Activated B cell treated with CpG ODN at 0.5 μM for 24 hours (primary cell): ENCODE measurements at regions of chr1 and their contacts with region 1.

Region 1: DNA sequence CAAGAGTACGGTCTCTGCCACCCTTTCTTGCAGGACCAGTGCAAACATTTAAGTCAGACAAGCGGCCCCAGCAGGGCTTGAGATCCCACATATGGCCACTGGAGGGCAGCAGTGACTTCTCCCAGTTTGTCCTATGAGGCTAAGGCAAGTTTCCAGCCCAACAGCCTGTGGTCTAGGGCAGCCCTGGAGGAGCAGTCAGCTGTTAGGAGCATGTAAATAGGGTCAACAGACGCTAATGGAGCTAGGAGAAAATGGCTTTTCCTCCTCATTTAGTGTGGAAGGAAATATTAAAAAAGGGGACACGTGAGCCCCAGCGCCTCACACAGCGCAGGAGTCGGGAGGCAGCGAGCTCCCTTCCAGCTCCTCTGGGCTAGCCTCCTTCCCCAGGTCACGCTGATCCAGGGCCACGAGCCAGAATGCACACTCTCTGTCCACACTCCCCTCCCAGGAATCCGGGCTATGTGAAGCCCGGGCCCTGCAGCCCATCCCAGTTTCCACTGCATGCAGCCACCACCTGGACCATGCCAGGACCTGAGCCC is 95.6 kb downstream of the LAMC2 start:
- DNase-seq: peak; percentile 57
- ATAC-seq: peak; percentile 67
- H3K4me3 Mint-ChIP-seq: no peak overlapping the region
- H3K27ac Mint-ChIP-seq: no peak overlapping the region
- H3K4me1 Mint-ChIP-seq: no peaks in the 10 kb centered on the region
- H3K27me3 Mint-ChIP-seq: peaks cover 17% of the 10 kb centered on the region
- CTCF ChIP-seq: peak; percentile 63

Region 2: GRCh38 chr1:183148599-183148998 is 133.0 kb before region 1 on chr1:
- CTCF ChIA-PET with region 1: no interaction called
- POLR2A ChIA-PET with region 1: no interaction called
- intact Hi-C with region 1: no loop called
- DNase-seq: no peak
- ATAC-seq: no peak
- H3K4me3 Mint-ChIP-seq: no peak overlapping the region
- H3K27ac Mint-ChIP-seq: no peak overlapping the region
- H3K4me1 Mint-ChIP-seq: no peaks in the 10 kb centered on the region
- H3K27me3 Mint-ChIP-seq: peaks cover 6% of the 10 kb centered on the region
- CTCF ChIP-seq: no peak

Region 3: GRCh38 chr1:183543619-183544204 is 262.1 kb after region 1 on chr1:
- CTCF ChIA-PET with region 1: no interaction called
- POLR2A ChIA-PET with region 1: no interaction called
- intact Hi-C with region 1: loop called (anchors 1 kb)
- DNase-seq: no peak
- ATAC-seq: peak; percentile 71
- H3K4me3 Mint-ChIP-seq: no peak overlapping the region
- H3K27ac Mint-ChIP-seq: no peak overlapping the region
- H3K4me1 Mint-ChIP-seq: peaks cover 30% of the 10 kb centered on the region
- H3K27me3 Mint-ChIP-seq: no peaks in the 10 kb centered on the region
- CTCF ChIP-seq: no peak